PC-3 (cell line): ENCODE measurements at regions of chr1 and their contacts with region 1.

Region 1: DNA sequence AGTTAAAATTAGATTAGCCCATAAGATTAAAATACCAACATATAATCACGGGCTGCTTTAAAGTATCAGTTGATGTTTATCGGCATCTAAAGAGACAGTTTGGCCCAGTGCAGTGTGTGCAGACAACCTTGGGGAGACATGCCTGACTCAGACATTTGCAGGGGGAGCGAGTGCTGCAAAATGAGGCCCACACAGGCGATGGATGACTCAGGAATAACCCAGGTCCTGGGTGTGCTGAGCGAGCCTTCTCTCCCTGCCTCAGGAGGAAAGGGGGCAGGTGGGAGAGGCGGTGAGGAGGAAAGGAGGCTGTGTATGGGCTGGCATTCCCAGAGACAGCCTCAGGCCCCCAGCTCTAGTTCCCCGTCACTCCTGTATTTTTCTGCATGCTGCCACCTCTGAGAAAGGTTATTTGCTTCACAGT is 9.0 kb downstream of the SLC9A1 start:
- DNase-seq: peak; percentile 85
- ATAC-seq: peak; percentile 67
- H3K4me3 ChIP-seq: peak overlapping the region; percentile 27; the same call in 1 of the 2 replicates
- H3K27ac ChIP-seq: peak overlapping the region; percentile 80
- H3K4me1 ChIP-seq: peaks cover 70% of the 10 kb centered on the region
- H3K27me3 ChIP-seq: no peaks in the 10 kb centered on the region
- CTCF ChIP-seq: no peak

Region 2: DNA sequence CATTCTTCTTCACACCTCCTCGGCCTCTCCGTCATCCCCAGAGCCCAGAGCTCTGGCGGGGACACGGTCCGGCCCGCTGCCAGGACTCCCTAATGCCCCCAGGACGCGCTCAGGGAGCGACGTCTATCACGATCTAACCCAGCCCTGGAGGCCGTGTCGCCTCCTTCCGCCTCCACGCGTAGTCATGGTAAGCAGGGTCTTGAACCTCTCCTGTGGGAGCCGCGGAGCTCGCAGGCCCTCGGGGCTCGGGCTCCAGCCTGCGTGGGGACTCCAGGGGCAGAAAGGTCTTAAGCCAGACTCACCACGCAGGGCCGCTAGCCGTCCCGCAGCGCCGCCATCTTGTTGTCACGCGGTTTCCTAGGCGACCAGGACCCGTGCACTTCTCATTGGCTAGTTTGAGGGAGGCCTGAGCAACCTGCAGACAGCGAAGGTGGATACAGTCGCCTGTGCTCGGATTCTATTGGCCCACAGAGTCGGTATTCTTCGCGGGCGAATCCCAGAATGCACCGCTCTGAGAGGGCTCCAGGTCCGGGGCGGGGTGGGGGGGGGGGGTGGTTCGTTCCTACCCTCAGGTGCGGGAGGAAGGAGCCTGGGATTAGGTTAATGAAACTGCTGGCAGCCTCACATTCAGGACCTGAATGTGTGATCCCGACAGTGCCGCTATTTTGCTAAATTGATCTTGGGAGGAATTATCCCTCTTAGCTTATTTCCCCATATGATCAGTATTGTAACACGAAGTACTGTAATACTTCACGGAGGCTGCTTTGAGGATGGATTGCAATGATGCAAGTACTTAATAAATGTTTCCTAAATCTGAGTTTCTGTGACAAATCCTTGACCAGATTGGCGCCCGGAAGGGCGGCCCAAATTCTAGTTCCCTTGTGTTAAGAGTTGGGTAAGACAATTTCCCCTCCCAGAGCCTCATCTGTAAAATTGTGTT is 839.4 kb before region 1 on chr1 and contains the start of gene UBXN11:
- CTCF ChIA-PET with region 1: no interaction called
- POLR2A ChIA-PET with region 1: no interaction called
- intact Hi-C with region 1: no loop called
- DNase-seq: peak; percentile 98
- ATAC-seq: peak; percentile 98
- H3K4me3 ChIP-seq: peak within 1 kb of the TSS; percentile 88
- H3K27ac ChIP-seq: peak within 1 kb of the TSS; percentile 22
- H3K4me1 ChIP-seq: peaks cover 32% of the 10 kb centered on the region
- H3K27me3 ChIP-seq: no peaks in the 10 kb centered on the region
- CTCF ChIP-seq: no peak
- total RNA-seq, gene UBXN11: 19.4 and 24.6 TPM in 2 replicates

Region 3: GRCh38 chr1:27163103-27163502 is 17.2 kb after region 1 on chr1:
- CTCF ChIA-PET with region 1: no interaction called
- POLR2A ChIA-PET with region 1: interaction called, 16 read pairs
- intact Hi-C with region 1: no loop called
- DNase-seq: peak; percentile 96
- ATAC-seq: peak; percentile 95
- H3K4me3 ChIP-seq: no peak overlapping the region
- H3K27ac ChIP-seq: peak overlapping the region; percentile 83
- H3K4me1 ChIP-seq: peaks cover 24% of the 10 kb centered on the region
- H3K27me3 ChIP-seq: no peaks in the 10 kb centered on the region
- CTCF ChIP-seq: no peak